ENCODE measurements at regions of chr6 and their contacts with region 1.

Region 1: DNA sequence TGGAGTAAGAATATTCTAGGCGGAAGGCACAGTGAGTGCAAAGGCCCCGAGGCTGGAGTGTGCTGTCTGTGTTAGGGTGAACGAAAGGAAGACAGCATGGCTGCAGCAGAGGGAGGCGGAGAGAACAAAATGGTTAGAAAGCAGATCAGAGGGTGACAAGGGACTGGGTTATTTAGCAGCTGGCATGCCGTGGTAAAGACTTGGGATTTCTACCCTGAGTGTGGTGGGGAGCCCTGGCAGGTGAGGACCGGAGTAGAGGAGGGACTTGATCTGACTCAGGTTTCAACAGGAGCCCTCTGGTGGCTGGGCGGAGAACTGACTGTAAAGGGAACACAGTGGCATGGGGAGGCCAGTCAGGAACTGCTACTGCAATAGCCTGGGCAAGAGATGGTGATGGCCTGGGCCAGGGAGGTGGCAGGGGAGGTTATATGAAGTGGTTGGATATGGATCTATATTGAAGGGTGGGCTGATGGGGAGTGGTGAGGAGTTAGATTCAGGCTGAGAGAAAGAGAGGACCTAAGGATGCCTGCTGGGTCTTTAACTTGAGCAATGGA is 38.0 kb downstream of the PIM1 start:
- DNase-seq: peak; percentile 75 to 95 (median 87)
- ATAC-seq: peak; percentile 70
- H3K4me3 ChIP-seq: no peak overlapping the region
- H3K4me3 Mint-ChIP-seq: peak overlapping the region; percentile 35
- H3K27ac ChIP-seq: peak overlapping the region in 1 of 2 experiments; percentile 4
- H3K27ac Mint-ChIP-seq: peak overlapping the region; percentile 85
- H3K4me1 ChIP-seq: peaks cover 51% of the 10 kb centered on the region
- H3K4me1 Mint-ChIP-seq: peaks cover 51% of the 10 kb centered on the region
- H3K27me3 ChIP-seq: no peaks in the 10 kb centered on the region
- H3K27me3 Mint-ChIP-seq: no peaks in the 10 kb centered on the region
- CTCF ChIP-seq: peak; percentile 83

Region 2: DNA sequence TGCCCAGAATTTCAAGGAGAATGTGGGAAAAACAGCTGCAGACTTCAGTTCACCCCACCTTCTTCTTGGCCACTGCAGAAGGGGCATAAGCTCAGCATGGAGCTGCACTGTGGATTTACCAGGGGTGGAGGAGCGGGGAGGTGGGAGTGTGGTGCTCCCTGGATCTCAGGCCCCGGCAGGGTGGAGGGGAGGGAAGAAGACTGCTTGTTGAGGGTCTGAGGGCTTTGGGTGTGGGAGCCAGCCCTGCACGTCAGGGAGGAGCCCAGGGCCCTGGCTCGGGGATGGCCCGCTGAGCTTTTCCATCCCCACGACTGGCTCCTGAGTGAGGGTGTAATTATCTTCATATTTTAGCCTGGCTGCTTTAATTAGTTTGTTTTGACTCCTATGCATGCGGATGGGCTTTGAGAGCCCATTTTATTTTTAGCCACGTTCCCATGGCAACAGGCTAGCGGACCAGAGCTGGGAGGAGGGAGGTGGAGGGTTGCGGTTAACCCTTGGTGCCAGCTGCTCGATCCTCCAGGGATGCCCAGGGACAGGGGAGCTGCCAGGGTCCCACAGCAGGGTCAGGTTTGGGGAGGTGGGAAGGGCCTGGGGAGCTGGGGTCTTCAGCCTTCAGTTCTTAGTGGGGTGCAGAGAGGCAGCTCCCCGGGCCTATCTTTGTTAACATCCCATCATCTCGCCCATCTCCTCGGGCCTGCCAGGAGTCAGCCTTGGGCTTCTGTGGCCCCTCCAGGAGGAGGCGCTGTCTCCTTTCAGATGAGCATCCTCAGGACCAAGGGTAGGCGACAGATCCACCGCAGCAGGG is 442.2 kb before region 1 on chr6:
- CTCF ChIA-PET with region 1: interaction called, 15 read pairs
- POLR2A ChIA-PET with region 1: no interaction called
- intact Hi-C with region 1: loop called (anchors 1 kb)
- DNase-seq: peak; percentile 65 to 87 (median 80)
- ATAC-seq: peak; percentile 95
- H3K4me3 ChIP-seq: no peak overlapping the region
- H3K4me3 Mint-ChIP-seq: no peak overlapping the region
- H3K27ac ChIP-seq: no peak overlapping the region
- H3K27ac Mint-ChIP-seq: no peak overlapping the region
- H3K4me1 ChIP-seq: peaks cover 42% of the 10 kb centered on the region
- H3K4me1 Mint-ChIP-seq: peaks cover 33% of the 10 kb centered on the region
- H3K27me3 ChIP-seq: no peaks in the 10 kb centered on the region
- H3K27me3 Mint-ChIP-seq: no peaks in the 10 kb centered on the region
- CTCF ChIP-seq: peak; percentile 75

Region 3: GRCh38 chr6:37038292-37039198 is 169.4 kb before region 1 on chr6:
- CTCF ChIA-PET with region 1: interaction called, 785 read pairs
- POLR2A ChIA-PET with region 1: no interaction called
- intact Hi-C with region 1: no loop called
- DNase-seq: no peak
- ATAC-seq: no peak
- H3K4me3 ChIP-seq: no peak overlapping the region
- H3K4me3 Mint-ChIP-seq: no peak overlapping the region
- H3K27ac ChIP-seq: no peak overlapping the region
- H3K27ac Mint-ChIP-seq: no peak overlapping the region
- H3K4me1 ChIP-seq: no peaks in the 10 kb centered on the region
- H3K4me1 Mint-ChIP-seq: peaks cover 9% of the 10 kb centered on the region
- H3K27me3 ChIP-seq: no peaks in the 10 kb centered on the region
- H3K27me3 Mint-ChIP-seq: no peaks in the 10 kb centered on the region
- CTCF ChIP-seq: no peak

Region 4: GRCh38 chr6:37182736-37183590 is 25.0 kb before region 1 on chr6:
- CTCF ChIA-PET with region 1: interaction called, 225 read pairs
- POLR2A ChIA-PET with region 1: interaction called, 3 read pairs
- intact Hi-C with region 1: no loop called
- DNase-seq: peak in 8 of 9 experiments; percentile 33 to 87 (median 68)
- ATAC-seq: peak; percentile 96
- H3K4me3 ChIP-seq: peak overlapping the region in 1 of 2 experiments; percentile 34
- H3K4me3 Mint-ChIP-seq: peak overlapping the region; percentile 62
- H3K27ac ChIP-seq: peak overlapping the region; percentile 61 to 73
- H3K27ac Mint-ChIP-seq: peak overlapping the region; percentile 95
- H3K4me1 ChIP-seq: peaks cover 78% of the 10 kb centered on the region
- H3K4me1 Mint-ChIP-seq: peaks cover 63% of the 10 kb centered on the region
- H3K27me3 ChIP-seq: no peaks in the 10 kb centered on the region
- H3K27me3 Mint-ChIP-seq: no peaks in the 10 kb centered on the region
- CTCF ChIP-seq: no peak

Region 5: GRCh38 chr6:37222125-37222967 is 14.4 kb after region 1 on chr6:
- CTCF ChIA-PET with region 1: interaction called, 15 read pairs
- POLR2A ChIA-PET with region 1: no interaction called
- intact Hi-C with region 1: no loop called
- DNase-seq: peak; percentile 27 to 81 (median 67)
- ATAC-seq: peak; percentile 93
- H3K4me3 ChIP-seq: peak overlapping the region; percentile 71 to 75
- H3K4me3 Mint-ChIP-seq: peak overlapping the region; percentile 85
- H3K27ac ChIP-seq: no peak overlapping the region
- H3K27ac Mint-ChIP-seq: peak overlapping the region; percentile 60
- H3K4me1 ChIP-seq: peaks cover 9% of the 10 kb centered on the region
- H3K4me1 Mint-ChIP-seq: peaks cover 12% of the 10 kb centered on the region
- H3K27me3 ChIP-seq: no peaks in the 10 kb centered on the region
- H3K27me3 Mint-ChIP-seq: no peaks in the 10 kb centered on the region
- CTCF ChIP-seq: no peak

Region 6: DNA sequence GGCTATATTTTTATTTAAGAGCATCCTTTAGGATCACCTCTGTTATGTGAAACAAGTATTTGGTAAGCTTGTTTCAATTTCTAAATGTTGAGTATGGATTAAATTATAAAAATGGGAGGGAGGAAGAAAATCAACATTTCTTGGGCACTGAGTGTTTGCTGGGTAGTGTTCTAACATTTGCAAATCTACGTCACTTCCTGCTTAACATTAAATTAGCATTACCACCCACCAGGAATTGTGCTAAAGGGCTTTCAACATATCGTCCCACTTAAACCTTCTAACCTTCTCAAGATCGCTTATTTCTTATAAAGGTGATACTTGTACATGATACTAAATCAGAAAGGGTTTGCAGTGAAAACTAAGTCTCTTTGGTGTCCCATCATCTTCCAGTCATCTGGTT is 57.9 kb after region 1 on chr6:
- CTCF ChIA-PET with region 1: no interaction called
- POLR2A ChIA-PET with region 1: no interaction called
- intact Hi-C with region 1: no loop called
- DNase-seq: no peak
- ATAC-seq: no peak
- H3K4me3 ChIP-seq: no peak overlapping the region
- H3K4me3 Mint-ChIP-seq: no peak overlapping the region
- H3K27ac ChIP-seq: no peak overlapping the region
- H3K27ac Mint-ChIP-seq: no peak overlapping the region
- H3K4me1 ChIP-seq: no peaks in the 10 kb centered on the region
- H3K4me1 Mint-ChIP-seq: peaks cover 34% of the 10 kb centered on the region
- H3K27me3 ChIP-seq: no peaks in the 10 kb centered on the region
- H3K27me3 Mint-ChIP-seq: no peaks in the 10 kb centered on the region
- CTCF ChIP-seq: no peak